ENCODE measurements at regions of chr11 and their contacts with region 1.

Region 1: GRCh38 chr11:125887373-125888324 is at the start of gene HYLS1:
- DNase-seq: peak; percentile 99
- ATAC-seq: peak; percentile 83
- H3K4me3 ChIP-seq: peak within 1 kb of the TSS; percentile 83
- H3K27ac ChIP-seq: peak within 1 kb of the TSS; percentile 87
- H3K4me1 ChIP-seq: peaks cover 59% of the 10 kb centered on the region
- H3K27me3 ChIP-seq: no peaks in the 10 kb centered on the region
- CTCF ChIP-seq: peak; percentile 39
- total RNA-seq, gene HYLS1: 16.4 and 23.5 TPM in 2 replicates

Region 2: DNA sequence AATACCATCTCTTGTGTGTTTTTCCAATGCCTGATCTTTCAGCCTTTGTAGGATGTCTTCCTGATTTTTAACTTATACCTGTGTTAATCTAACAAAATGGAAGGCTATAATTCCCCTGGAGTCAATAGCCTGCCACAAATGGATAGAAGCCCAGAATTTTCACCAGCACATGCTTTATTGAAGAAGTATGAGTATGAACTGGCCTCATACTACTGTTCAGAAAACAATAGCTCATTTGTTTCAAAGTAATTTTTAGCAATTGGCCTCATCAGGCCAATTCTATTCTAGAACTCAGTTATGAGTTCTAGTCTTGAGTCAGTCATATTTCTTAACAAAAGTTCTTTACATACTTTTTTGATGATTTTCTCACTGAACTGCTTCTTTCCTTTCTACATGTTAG is 865.1 kb before region 1 on chr11:
- CTCF ChIA-PET with region 1: no interaction called
- POLR2A ChIA-PET with region 1: no interaction called
- intact Hi-C with region 1: no loop called
- DNase-seq: no peak
- ATAC-seq: peak; percentile 25; the same call in 1 of the 2 replicates
- H3K4me3 ChIP-seq: no peak overlapping the region
- H3K27ac ChIP-seq: no peak overlapping the region
- H3K4me1 ChIP-seq: peaks cover 11% of the 10 kb centered on the region
- H3K27me3 ChIP-seq: no peaks in the 10 kb centered on the region
- CTCF ChIP-seq: no peak

Region 3: GRCh38 chr11:125568970-125569914 is 318.4 kb before region 1 on chr11 and contains the start of gene EI24:
- CTCF ChIA-PET with region 1: no interaction called
- POLR2A ChIA-PET with region 1: interaction called, 3 read pairs
- intact Hi-C with region 1: loop called (anchors 10 kb)
- DNase-seq: peak; percentile 97
- ATAC-seq: peak; percentile 98
- H3K4me3 ChIP-seq: peak within 1 kb of the TSS; percentile 90
- H3K27ac ChIP-seq: peak within 1 kb of the TSS; percentile 48
- H3K4me1 ChIP-seq: peaks cover 14% of the 10 kb centered on the region
- H3K27me3 ChIP-seq: no peaks in the 10 kb centered on the region
- CTCF ChIP-seq: peak; percentile 59
- total RNA-seq, gene EI24: 154 and 166 TPM in 2 replicates

Region 4: GRCh38 chr11:125625630-125626287 is 261.9 kb before region 1 on chr11:
- CTCF ChIA-PET with region 1: no interaction called
- POLR2A ChIA-PET with region 1: interaction called, 4 read pairs
- intact Hi-C with region 1: loop called (anchors 5 kb)
- DNase-seq: peak; percentile 96
- ATAC-seq: peak; percentile 65
- H3K4me3 ChIP-seq: peak overlapping the region; percentile 80
- H3K27ac ChIP-seq: peak overlapping the region; percentile 89
- H3K4me1 ChIP-seq: peaks cover 34% of the 10 kb centered on the region
- H3K27me3 ChIP-seq: no peaks in the 10 kb centered on the region
- CTCF ChIP-seq: no peak

Measured in PC-3 (cell line).